ENCODE measurements at regions of chr6 and their contacts with region 1.

Region 1: GRCh38 chr6:155340464-155341129 is 26.3 kb upstream of the TFB1M start:
- DNase-seq: no peak
- ATAC-seq: no peak
- H3K4me3 Mint-ChIP-seq: no peak overlapping the region
- H3K27ac Mint-ChIP-seq: peak overlapping the region; percentile 26
- H3K4me1 Mint-ChIP-seq: peaks cover 28% of the 10 kb centered on the region
- H3K27me3 Mint-ChIP-seq: no peaks in the 10 kb centered on the region
- CTCF ChIP-seq: no peak

Region 2: GRCh38 chr6:155418017-155418761 is 77.6 kb after region 1 on chr6:
- CTCF ChIA-PET with region 1: no interaction called
- POLR2A ChIA-PET with region 1: interaction called, 5 read pairs
- intact Hi-C with region 1: loop called (anchors 5 kb)
- DNase-seq: no peak
- ATAC-seq: peak; percentile 81
- H3K4me3 Mint-ChIP-seq: peak overlapping the region; percentile 82
- H3K27ac Mint-ChIP-seq: peak overlapping the region; percentile 95
- H3K4me1 Mint-ChIP-seq: peaks cover 50% of the 10 kb centered on the region
- H3K27me3 Mint-ChIP-seq: no peaks in the 10 kb centered on the region
- CTCF ChIP-seq: no peak

Region 3: DNA sequence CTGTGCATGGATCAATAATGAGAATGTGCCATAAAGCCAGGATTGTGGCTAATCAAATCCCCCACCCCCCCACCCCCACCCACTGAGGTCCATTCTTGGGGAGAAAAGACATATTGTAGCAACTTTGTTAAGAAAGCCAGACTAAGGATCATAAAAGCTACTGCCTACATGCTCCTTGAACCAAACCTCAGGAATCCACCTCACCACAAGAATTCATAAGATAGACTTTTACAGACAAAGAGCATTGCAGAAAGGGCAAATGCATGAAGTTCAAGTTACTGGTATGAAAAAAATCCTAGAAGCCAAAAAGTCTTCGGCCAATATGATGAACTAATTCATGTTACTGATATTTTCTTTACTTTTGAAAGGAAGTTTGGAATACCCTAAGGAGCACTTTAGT is 1248.7 kb after region 1 on chr6:
- CTCF ChIA-PET with region 1: no interaction called
- POLR2A ChIA-PET with region 1: no interaction called
- intact Hi-C with region 1: no loop called
- DNase-seq: no peak
- ATAC-seq: no peak
- H3K4me3 Mint-ChIP-seq: no peak overlapping the region
- H3K27ac Mint-ChIP-seq: no peak overlapping the region
- H3K4me1 Mint-ChIP-seq: no peaks in the 10 kb centered on the region
- H3K27me3 Mint-ChIP-seq: peaks cover 6% of the 10 kb centered on the region
- CTCF ChIP-seq: no peak

Region 4: DNA sequence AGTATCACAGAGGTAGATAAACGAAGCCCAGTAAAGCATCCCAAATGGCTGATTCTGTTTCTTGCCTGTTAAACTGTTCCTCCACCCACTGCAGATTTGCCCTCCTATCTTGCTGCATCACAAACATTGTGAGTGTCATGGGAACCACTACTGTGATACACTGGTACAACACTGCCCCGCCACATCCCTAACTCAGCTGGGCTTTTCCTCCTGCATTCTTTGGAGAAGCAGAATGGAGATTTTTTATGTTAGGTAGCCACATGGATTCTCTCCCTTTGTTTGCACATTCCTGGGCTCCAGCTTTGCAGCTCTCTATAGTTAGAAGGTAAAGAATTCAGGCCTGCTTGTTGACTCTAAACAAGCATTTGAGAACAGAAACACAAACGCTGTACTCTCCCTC is 1748.7 kb after region 1 on chr6:
- CTCF ChIA-PET with region 1: no interaction called
- POLR2A ChIA-PET with region 1: no interaction called
- intact Hi-C with region 1: no loop called
- DNase-seq: no peak
- ATAC-seq: no peak
- H3K4me3 Mint-ChIP-seq: no peak overlapping the region
- H3K27ac Mint-ChIP-seq: no peak overlapping the region
- H3K4me1 Mint-ChIP-seq: peaks cover 36% of the 10 kb centered on the region
- H3K27me3 Mint-ChIP-seq: no peaks in the 10 kb centered on the region
- CTCF ChIP-seq: no peak

Measured in activated B cell treated with CpG ODN at 0.5 μM for 24 hours (primary cell).